ENCODE measurements at regions of chr10 and their contacts with region 1.

Region 1: GRCh38 chr10:124741281-124741921 is 2.8 kb downstream of the FAM53B start:
- DNase-seq: peak; percentile 67
- ATAC-seq: peak; percentile 54
- H3K4me3 Mint-ChIP-seq: peak overlapping the region; percentile 97
- H3K27ac Mint-ChIP-seq: peak overlapping the region; percentile 97
- H3K4me1 Mint-ChIP-seq: peaks cover 75% of the 10 kb centered on the region
- H3K27me3 Mint-ChIP-seq: no peaks in the 10 kb centered on the region
- CTCF ChIP-seq: peak; percentile 41

Region 2: DNA sequence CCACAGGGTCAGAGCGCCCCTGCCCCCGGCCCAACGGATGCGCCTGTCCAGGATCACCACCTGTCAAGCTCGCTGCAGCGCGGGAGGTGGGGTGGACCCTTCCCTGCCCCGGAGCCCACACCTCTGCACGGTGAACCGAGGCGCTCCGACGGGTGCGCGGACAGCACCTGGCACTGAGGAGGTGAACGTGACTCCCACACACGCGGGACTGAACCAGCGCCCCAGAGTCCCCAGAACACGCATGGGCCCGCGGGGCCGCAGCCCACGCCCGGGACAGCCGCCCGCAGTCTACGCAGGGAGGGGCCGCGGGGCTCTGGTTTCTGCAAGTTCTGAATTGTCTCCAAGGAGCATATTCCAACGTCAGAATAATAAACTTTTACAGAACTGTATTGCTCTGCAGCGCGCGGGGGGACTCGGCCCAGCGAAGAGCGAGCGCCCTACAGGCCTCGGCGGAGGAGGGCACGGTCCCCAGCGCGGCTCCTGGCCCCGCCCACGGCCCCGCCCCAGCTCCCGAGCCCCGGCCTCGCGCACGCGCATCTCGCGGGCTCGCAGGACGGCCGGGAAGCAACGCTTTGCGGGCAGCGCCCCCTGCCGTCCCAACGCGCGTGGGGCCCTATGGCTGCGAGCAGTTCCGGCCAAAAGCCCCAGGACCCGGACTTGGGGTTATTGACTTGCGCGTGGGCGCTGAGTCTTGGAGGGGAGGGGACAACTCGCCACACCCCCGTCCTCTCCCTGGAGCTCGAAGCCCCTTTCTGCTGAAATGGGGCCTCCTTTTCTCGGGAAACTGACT is 352.4 kb before region 1 on chr10:
- CTCF ChIA-PET with region 1: interaction called, 13 read pairs
- POLR2A ChIA-PET with region 1: no interaction called
- intact Hi-C with region 1: loop called (anchors 2 kb)
- DNase-seq: peak; percentile 97
- ATAC-seq: peak; percentile 99
- H3K4me3 Mint-ChIP-seq: peak overlapping the region; percentile 58
- H3K27ac Mint-ChIP-seq: no peak overlapping the region
- H3K4me1 Mint-ChIP-seq: peaks cover 3% of the 10 kb centered on the region
- H3K27me3 Mint-ChIP-seq: peaks cover 7% of the 10 kb centered on the region
- CTCF ChIP-seq: peak; percentile 86

Region 3: DNA sequence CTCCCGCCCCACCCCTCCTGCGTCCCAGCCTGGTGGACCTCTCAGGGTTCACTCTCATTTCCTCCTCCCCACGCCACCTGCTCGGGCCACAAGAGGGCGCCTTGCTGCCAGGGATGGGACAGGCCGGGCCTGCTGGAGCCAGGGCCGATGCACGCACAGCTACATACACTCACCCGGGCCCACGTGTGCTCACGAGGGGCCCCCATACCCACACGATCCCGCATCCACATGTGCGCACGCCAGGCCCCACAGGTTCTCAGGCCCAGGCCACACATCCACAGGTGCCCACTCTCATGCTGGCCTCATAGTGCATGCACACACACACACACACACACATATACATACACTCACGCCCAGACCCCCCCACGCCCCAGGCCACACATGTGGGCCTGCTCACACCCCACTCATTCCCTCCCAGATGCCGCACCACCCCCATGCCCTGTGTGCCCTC is 211.2 kb before region 1 on chr10:
- CTCF ChIA-PET with region 1: interaction called, 307 read pairs
- POLR2A ChIA-PET with region 1: interaction called, 134 read pairs
- intact Hi-C with region 1: loop called (anchors 1 kb)
- DNase-seq: peak; percentile 86
- ATAC-seq: peak; percentile 91
- H3K4me3 Mint-ChIP-seq: no peak overlapping the region
- H3K27ac Mint-ChIP-seq: peak overlapping the region; percentile 71
- H3K4me1 Mint-ChIP-seq: peaks cover 56% of the 10 kb centered on the region
- H3K27me3 Mint-ChIP-seq: no peaks in the 10 kb centered on the region
- CTCF ChIP-seq: no peak

Region 4: GRCh38 chr10:124612611-124613498 is 128.5 kb before region 1 on chr10:
- CTCF ChIA-PET with region 1: interaction called, 13 read pairs
- POLR2A ChIA-PET with region 1: interaction called, 63 read pairs
- intact Hi-C with region 1: loop called (anchors 2 kb)
- DNase-seq: no peak
- ATAC-seq: peak; percentile 54
- H3K4me3 Mint-ChIP-seq: peak overlapping the region; percentile 45
- H3K27ac Mint-ChIP-seq: peak overlapping the region; percentile 96
- H3K4me1 Mint-ChIP-seq: peaks cover 83% of the 10 kb centered on the region
- H3K27me3 Mint-ChIP-seq: no peaks in the 10 kb centered on the region
- CTCF ChIP-seq: no peak

Region 5: DNA sequence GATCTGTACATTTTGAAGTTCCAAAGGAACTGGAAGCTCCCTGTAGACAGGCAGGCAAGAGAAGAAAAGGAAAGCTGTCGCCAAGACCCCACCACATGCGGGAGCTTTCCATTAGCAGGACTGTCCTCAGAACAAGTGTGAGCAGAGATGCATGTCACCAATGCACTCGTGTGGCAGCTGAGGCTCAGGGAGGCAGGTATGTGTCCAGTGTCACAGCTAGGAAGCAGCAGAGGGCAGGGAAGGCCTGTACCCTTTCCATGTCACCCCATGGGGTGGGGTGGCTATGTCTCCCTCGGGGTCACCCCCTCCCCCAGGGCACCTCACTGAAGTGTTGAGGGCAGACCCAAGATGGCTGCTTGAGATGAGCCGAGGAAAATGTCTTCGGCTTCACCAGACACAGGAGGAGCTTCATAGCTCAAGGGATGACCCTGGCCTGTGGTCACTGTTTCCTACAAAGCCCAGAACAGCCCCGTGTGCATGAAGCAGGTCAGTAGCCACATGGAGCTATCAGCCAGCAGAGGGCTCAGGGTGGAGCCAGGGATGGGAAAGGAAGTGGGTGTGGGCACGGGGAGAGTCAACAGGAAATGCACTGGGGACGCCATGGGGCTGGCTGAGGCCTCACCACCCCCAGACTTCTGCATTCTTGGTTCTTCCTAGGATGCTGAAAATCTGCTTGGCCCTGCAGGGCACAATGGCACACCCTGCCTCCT is 93.8 kb before region 1 on chr10:
- CTCF ChIA-PET with region 1: interaction called, 39 read pairs
- POLR2A ChIA-PET with region 1: interaction called, 39 read pairs
- intact Hi-C with region 1: loop called (anchors 1 kb)
- DNase-seq: no peak
- ATAC-seq: peak; percentile 64
- H3K4me3 Mint-ChIP-seq: peak overlapping the region; percentile 62
- H3K27ac Mint-ChIP-seq: peak overlapping the region; percentile 88
- H3K4me1 Mint-ChIP-seq: peaks cover 100% of the 10 kb centered on the region
- H3K27me3 Mint-ChIP-seq: no peaks in the 10 kb centered on the region
- CTCF ChIP-seq: no peak

Region 6: GRCh38 chr10:124703778-124704427 is 37.5 kb before region 1 on chr10:
- CTCF ChIA-PET with region 1: interaction called, 20 read pairs
- POLR2A ChIA-PET with region 1: interaction called, 34 read pairs
- intact Hi-C with region 1: no loop called
- DNase-seq: no peak
- ATAC-seq: no peak
- H3K4me3 Mint-ChIP-seq: no peak overlapping the region
- H3K27ac Mint-ChIP-seq: peak overlapping the region; percentile 96
- H3K4me1 Mint-ChIP-seq: peaks cover 99% of the 10 kb centered on the region
- H3K27me3 Mint-ChIP-seq: no peaks in the 10 kb centered on the region
- CTCF ChIP-seq: no peak

Region 7: DNA sequence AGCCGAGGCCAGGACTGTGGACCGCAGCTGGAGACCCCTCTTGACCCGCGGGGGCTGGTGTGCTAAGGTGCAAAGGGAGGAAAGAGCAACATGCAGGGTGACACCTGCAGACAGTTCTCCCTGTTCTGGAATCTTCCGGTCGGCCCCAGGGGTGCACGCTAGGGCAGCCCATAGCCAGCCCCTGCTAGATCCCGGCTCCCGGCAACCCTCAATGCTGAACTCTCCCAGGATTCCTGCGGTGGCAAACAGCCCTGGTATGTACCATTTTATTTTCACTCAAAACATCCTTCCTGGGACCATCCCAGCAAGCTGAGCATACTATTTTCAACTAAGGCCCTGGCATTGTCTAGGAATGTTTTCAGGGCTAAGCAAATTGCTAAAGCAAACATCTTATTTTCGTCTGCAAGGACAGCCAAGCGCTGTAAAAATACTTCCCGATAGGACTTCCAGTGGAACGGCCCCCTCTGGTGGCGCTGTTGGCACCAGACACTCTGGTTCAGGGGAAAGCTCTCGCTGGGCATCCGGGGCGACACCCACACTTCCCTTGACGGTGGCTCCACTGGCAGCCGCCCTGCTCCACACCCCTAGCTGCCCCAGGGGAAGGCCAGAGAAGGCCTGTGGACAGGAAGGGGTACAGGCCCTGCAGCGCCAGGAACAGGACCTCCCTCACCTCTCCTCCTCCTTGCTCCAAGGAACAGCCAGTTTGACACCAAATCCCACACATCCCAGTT is 319.6 kb after region 1 on chr10:
- CTCF ChIA-PET with region 1: no interaction called
- POLR2A ChIA-PET with region 1: no interaction called
- intact Hi-C with region 1: loop called (anchors 2 kb)
- DNase-seq: no peak
- ATAC-seq: no peak
- H3K4me3 Mint-ChIP-seq: no peak overlapping the region
- H3K27ac Mint-ChIP-seq: no peak overlapping the region
- H3K4me1 Mint-ChIP-seq: peaks cover 45% of the 10 kb centered on the region
- H3K27me3 Mint-ChIP-seq: peaks cover 48% of the 10 kb centered on the region
- CTCF ChIP-seq: no peak